Activated CD4-positive, alpha-beta T cell treated with anti-CD3 and anti-CD28 coated beads for 36 hours (primary cell): ENCODE measurements at regions of chr16 and their contacts with region 1.

Region 1: GRCh38 chr16:57609541-57610401 is 18.7 kb upstream of the ADGRG1 start:
- DNase-seq: peak; percentile 93
- ATAC-seq: peak; percentile 94
- H3K4me3 Mint-ChIP-seq: peak overlapping the region; percentile 48
- H3K27ac Mint-ChIP-seq: peak overlapping the region; percentile 92
- H3K4me1 Mint-ChIP-seq: peaks cover 60% of the 10 kb centered on the region
- H3K27me3 Mint-ChIP-seq: no peaks in the 10 kb centered on the region

Region 2: GRCh38 chr16:57260294-57260929 is 349.4 kb before region 1 on chr16:
- CTCF ChIA-PET with region 1: no interaction called
- POLR2A ChIA-PET with region 1: no interaction called
- intact Hi-C with region 1: no loop called
- DNase-seq: peak; percentile 30
- ATAC-seq: peak; percentile 63
- H3K4me3 Mint-ChIP-seq: peak overlapping the region; percentile 21
- H3K27ac Mint-ChIP-seq: peak overlapping the region; percentile 82
- H3K4me1 Mint-ChIP-seq: peaks cover 23% of the 10 kb centered on the region
- H3K27me3 Mint-ChIP-seq: no peaks in the 10 kb centered on the region

Region 3: GRCh38 chr16:57485916-57486857 is 123.6 kb before region 1 on chr16 and contains the start of gene DOK4:
- CTCF ChIA-PET with region 1: no interaction called
- POLR2A ChIA-PET with region 1: no interaction called
- intact Hi-C with region 1: no loop called
- DNase-seq: peak; percentile 89
- ATAC-seq: peak; percentile 93
- H3K4me3 Mint-ChIP-seq: peak within 1 kb of the TSS; percentile 75
- H3K27ac Mint-ChIP-seq: peak within 1 kb of the TSS; percentile 71
- H3K4me1 Mint-ChIP-seq: peaks cover 22% of the 10 kb centered on the region
- H3K27me3 Mint-ChIP-seq: no peaks in the 10 kb centered on the region
- total RNA-seq, gene DOK4: 5.7 to 6.7 TPM

Region 4: DNA sequence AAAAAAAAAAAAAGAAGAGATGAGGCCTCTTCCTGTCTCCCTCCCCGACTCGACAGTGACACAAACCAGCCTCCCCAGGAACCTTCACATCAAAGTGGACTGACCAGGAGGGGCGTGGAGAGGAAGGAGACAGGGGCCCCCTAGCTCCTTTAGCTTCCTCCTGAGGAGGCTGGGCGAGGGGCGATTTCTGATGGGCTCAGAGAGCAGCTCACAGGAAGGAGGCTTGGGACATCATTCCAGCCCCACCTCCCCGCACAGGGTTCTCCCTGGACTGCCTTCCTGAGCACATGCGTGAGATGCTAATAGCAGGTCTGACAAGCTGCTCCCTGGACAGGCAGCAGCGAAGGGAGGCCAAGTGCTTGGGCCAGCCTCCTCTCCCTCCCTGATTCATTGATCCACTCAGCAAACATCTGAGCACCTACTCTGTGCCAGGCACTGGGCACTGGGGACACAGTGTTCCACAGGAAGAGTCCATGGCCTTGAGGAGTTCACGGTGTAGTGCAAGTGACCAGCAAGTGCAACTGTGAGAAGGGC is 109.1 kb before region 1 on chr16:
- CTCF ChIA-PET with region 1: no interaction called
- POLR2A ChIA-PET with region 1: no interaction called
- intact Hi-C with region 1: no loop called
- DNase-seq: no peak
- ATAC-seq: peak; percentile 88
- H3K4me3 Mint-ChIP-seq: no peak overlapping the region
- H3K27ac Mint-ChIP-seq: no peak overlapping the region
- H3K4me1 Mint-ChIP-seq: peaks cover 11% of the 10 kb centered on the region
- H3K27me3 Mint-ChIP-seq: no peaks in the 10 kb centered on the region

Region 5: DNA sequence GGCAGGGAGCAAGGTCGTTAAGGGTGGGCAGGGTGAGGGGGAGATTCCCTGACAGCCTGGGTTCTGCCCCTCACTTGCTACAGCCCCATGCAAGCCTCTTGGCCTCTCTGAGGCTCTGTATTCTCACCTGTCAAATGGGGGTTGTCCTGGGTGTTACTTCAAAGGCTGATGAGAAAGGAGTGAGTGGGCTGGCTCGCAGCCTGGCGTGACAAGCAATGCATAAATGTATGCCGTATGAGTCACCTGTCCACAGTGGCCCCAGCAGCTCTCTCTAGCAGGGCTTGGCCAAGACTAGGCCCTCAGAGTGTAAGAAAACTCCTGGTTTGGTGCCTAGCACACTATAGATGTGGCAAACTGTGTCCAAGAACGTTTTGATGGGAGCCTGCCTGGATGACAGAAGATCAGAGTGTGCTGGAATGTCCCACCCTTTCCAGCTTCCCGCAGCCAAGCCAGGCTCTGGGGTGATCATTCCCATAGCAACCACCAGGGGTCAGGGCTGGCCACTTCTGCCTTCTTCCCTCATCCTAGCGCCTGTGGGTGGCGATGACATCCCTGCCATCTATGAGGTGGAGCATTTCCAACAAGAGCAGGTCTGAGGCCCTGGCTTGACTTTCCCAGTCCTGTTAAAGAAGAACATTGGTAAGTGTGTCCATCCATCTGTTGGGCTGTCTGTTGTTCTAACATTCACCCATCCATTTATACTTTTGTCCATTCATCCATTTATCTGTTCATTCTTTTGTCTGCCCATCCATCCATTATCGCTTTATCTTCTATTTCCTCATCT is 18.5 kb before region 1 on chr16:
- CTCF ChIA-PET with region 1: interaction called, 17 read pairs
- POLR2A ChIA-PET with region 1: interaction called, 5 read pairs
- intact Hi-C with region 1: loop called (anchors 1 to 2 kb)
- DNase-seq: peak; percentile 87
- ATAC-seq: peak; percentile 90
- H3K4me3 Mint-ChIP-seq: peak overlapping the region; percentile 60
- H3K27ac Mint-ChIP-seq: peak overlapping the region; percentile 92
- H3K4me1 Mint-ChIP-seq: peaks cover 32% of the 10 kb centered on the region
- H3K27me3 Mint-ChIP-seq: no peaks in the 10 kb centered on the region

Region 6: GRCh38 chr16:57628008-57628781 is 18.4 kb after region 1 on chr16 and contains the start of gene ADGRG1:
- CTCF ChIA-PET with region 1: interaction called, 4 read pairs
- POLR2A ChIA-PET with region 1: interaction called, 9 read pairs
- intact Hi-C with region 1: loop called in 1 of 2 experiments (anchors 1 kb)
- DNase-seq: peak; percentile 85
- ATAC-seq: peak; percentile 97
- H3K4me3 Mint-ChIP-seq: peak within 1 kb of the TSS; percentile 18
- H3K27ac Mint-ChIP-seq: no peak within 1 kb of the TSS
- H3K4me1 Mint-ChIP-seq: peaks cover 13% of the 10 kb centered on the region
- H3K27me3 Mint-ChIP-seq: peaks cover 17% of the 10 kb centered on the region
- total RNA-seq, gene ADGRG1: 6.3 to 6.8 TPM